BJ (cell line): ENCODE measurements at regions of chr7 and their contacts with region 1.

Region 1: DNA sequence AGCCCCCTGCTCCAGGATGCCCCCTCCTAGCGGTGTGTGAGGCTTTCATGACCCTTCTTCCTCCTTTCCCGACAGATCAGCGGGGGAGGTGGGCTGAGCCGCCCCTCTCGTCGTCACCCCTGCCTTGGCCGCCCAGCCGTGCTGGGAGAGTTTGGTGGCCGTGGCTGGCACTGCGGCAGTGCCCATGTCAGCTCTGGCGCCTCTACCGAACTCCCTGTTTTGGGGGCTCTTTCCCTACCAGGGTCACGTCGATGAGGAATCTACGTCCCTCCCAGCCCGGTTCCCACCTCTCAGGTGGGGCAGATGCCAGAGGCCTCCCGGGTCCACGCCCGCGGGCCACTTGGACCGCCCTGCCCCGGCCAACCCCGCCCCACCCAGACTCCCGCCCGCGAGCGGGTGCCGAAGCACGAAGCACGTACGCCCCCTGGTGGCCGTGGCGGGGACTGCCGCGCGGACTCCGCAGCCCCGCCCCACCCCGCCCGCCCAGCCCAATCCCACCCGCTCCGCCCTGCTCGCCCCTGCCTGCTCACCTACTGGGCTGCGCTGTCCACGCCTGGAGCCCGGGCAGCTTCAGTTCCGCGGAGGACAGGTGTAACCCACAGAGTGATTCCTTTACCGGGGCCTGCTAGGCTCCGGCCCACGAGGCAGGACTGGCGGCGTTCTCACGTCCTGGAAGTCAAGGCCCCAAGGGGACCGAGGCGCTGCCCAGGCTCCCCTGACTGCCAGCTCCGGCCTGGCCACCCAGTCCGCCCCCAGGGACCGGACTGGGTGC is 127.1 kb downstream of the UBE2H start:
- DNase-seq: no peak
- H3K4me3 ChIP-seq: peak overlapping the region; percentile 68
- H3K27me3 ChIP-seq: no peaks in the 10 kb centered on the region
- CTCF ChIP-seq: peak; percentile 39

Region 2: DNA sequence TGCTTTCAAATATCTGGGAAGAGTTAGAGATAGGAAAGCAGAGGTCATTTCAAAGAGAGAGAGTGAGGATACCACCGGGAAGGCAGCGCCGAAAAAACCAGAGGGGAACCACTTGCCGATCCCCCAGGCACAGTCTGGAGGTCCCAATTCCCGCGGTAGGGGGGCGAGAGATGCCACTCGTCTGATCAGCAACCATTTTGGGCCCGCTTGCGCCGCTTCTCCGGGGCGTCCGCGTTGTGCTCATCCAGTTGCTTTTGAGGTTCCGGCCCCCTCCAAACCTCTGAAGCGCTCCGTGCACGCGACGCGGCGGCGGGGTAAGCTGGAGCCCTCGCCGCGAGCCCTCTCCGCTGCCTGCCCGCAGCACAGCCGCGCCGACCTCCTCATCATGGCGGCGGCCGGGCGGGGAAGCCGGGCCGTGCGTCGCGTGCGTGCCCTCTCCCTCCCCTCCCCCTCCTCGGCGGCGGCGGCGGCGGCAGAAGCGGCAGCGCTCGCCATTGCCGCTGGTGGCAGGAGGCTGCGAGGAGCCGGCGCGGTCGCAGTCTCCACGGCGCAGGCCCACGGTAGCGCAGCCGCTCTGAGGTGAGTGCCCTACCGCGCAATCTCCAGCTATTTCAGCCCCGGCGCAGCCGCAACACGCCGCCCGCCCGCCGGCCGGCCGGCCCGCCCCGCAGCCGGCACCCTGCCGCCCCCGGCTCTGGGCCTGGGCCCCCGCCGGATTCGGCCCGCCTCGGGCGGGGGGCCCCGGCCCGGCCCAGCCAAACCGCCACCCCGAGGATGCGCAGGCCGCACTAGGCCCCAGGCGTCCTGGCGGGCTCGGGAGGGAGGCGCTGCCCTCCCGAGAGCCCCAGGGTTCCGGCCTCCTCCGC is 214.2 kb before region 1 on chr7 and contains the start of gene NRF1:
- CTCF ChIA-PET with region 1: interaction called, 15 read pairs
- POLR2A ChIA-PET with region 1: no interaction called
- DNase-seq: peak; percentile 41
- H3K4me3 ChIP-seq: peak within 1 kb of the TSS; percentile 62
- H3K27me3 ChIP-seq: no peaks in the 10 kb centered on the region
- CTCF ChIP-seq: no peak
- polyA plus RNA-seq, gene NRF1: 13.0 and 13.3 TPM in 2 replicates

Region 3: GRCh38 chr7:129664029-129665012 is 161.4 kb before region 1 on chr7:
- CTCF ChIA-PET with region 1: interaction called, 45 read pairs
- POLR2A ChIA-PET with region 1: no interaction called
- DNase-seq: peak; percentile 28
- H3K4me3 ChIP-seq: no peak overlapping the region
- H3K27me3 ChIP-seq: no peaks in the 10 kb centered on the region
- CTCF ChIP-seq: peak; percentile 61

Region 4: GRCh38 chr7:129845178-129845971 is 19.7 kb after region 1 on chr7:
- CTCF ChIA-PET with region 1: interaction called, 16 read pairs
- POLR2A ChIA-PET with region 1: interaction called, 6 read pairs
- DNase-seq: no peak
- H3K4me3 ChIP-seq: no peak overlapping the region
- H3K27me3 ChIP-seq: no peaks in the 10 kb centered on the region
- CTCF ChIP-seq: no peak

Region 5: DNA sequence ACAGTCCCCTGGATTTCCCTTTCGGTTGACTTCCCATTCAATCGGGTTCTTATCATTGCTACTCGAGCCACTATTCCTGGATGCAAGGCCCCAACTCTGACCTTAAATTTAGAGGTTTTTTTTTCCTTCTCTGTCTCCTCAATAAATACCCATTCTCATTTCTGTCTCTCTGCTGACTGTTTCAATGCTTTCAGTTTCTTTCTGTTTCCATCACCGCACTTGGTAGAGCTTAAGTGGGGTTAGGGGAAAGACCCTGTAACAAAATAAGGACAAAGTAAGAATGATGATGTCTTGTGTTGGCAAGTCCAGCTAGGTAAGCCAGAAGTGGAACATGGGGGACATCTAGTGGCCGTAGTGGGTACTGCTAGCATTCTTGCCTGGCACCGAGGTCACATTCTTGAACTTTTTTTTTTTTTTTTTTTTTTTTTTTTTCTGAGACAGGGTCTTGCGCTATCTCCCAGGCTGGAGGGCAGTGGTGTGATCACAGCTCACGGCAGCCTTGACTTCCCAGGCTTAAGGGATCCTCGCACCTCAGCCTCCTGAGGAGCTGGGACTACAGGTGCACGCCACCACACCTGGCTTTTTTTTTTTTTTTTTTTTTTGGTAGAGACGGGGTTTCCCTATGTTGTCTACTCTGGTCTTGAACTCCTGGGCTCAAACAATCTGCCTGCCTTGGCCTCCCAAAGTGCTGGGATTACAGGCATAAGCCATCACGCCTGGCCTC is 185.2 kb after region 1 on chr7:
- CTCF ChIA-PET with region 1: interaction called, 59 read pairs
- POLR2A ChIA-PET with region 1: no interaction called
- DNase-seq: peak; percentile 61
- H3K4me3 ChIP-seq: no peak overlapping the region
- H3K27me3 ChIP-seq: no peaks in the 10 kb centered on the region; the same call in 1 of the 2 replicates
- CTCF ChIP-seq: peak; percentile 89